Right ventricle myocardium superior (tissue), 1 donor: ENCODE measurements at regions of chr11 and their contacts with region 1.

Region 1: GRCh38 chr11:11538277-11538960 is 83.4 kb downstream of the GALNT18 start:
- DNase-seq: peak; percentile 82
- ATAC-seq: peak; percentile 85

Region 2: DNA sequence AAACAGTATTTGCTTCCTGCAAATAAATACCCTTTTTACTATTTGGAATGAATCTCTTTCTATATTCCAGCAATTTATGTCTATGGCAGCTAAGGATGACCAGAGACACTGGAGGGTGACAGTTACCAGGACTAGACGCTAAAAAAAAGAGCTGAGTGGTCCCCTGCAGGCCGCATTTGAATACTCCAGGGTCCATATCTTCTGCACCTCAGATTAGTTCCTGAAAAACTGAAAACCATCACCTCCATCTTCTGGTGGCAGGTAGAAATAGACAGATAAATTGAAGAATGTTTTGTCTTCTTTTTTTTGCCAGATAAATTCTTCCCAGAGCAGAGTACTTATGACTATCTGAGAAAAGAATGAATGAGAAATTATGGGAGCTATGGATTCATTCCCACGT is 331.0 kb before region 1 on chr11:
- intact Hi-C with region 1: no loop called
- DNase-seq: no peak
- ATAC-seq: no peak

Region 3: DNA sequence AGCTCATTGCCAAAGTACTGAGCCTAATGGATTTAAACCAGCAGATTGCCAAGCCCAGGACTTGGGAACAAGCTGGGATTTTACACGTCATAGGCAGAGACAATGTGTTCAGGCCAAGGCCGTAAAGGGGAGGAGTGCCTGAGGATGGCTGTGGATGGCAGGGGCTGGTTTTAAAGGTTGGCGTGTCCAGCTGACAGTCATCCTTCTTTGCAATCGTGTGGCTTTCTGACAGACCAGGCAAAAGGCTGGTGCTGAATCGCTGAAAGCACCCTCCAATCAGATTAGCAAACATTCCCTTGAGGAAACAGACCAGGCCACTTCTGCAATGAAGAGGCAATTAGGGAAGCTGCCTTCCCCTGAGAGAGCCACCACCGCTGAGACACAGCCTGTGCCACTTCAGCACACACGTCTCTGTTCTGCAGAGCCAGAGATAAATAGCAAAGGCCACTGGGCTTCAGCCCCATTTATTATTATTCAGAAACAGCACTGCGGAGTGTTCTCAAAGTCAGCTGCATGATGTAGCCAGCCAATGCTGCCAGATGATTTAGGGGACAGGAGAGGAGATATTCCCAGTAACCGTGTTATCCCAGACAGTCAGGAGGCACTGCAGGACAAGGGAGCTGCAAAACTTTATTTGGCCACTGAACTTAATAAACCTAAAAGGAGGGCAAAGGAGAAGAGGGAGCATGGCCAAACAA is 131.2 kb before region 1 on chr11:
- intact Hi-C with region 1: loop called (anchors 5 kb)
- DNase-seq: peak; percentile 53
- ATAC-seq: peak; percentile 80

Region 4: GRCh38 chr11:11717064-11717725 is 178.8 kb after region 1 on chr11:
- intact Hi-C with region 1: no loop called
- DNase-seq: no peak
- ATAC-seq: no peak